Naive thymus-derived CD4-positive, alpha-beta T cell (primary cell): ENCODE measurements at regions of chr12 and their contacts with region 1.

Region 1: DNA sequence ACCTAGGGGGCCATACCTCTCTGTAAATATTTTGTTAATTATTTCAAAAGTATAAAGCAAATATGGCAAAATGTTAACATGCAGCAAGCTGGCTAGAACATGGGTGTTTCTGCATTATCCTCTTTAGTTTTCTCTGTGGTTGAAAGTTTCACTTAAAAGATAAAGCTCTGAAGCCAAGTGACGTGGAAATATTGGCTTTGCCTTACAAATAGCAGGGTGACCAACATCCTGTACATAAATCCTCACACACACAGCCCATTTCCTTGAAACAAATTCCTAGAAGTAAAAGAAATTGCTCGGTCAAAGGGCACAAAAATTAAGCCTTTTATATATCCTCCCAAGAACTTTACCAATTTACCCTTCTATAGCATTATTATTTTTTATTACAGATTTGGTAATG is 10.6 kb upstream of the VWF start:
- DNase-seq: no peak
- ATAC-seq: no peak
- H3K4me3 ChIP-seq: no peak overlapping the region
- H3K4me3 Mint-ChIP-seq: no peak overlapping the region
- H3K27ac ChIP-seq: no peak overlapping the region
- H3K27ac Mint-ChIP-seq: peak overlapping the region in 1 of 9 donors; percentile 41
- H3K4me1 ChIP-seq: peaks cover 0 to 16% of the 10 kb centered on the region in 2 donors
- H3K4me1 Mint-ChIP-seq: peaks cover 14 to 29% (median 19%) of the 10 kb centered on the region in 7 donors
- H3K27me3 ChIP-seq: no peaks in the 10 kb centered on the region
- H3K27me3 Mint-ChIP-seq: no peaks in the 10 kb centered on the region

Region 2: DNA sequence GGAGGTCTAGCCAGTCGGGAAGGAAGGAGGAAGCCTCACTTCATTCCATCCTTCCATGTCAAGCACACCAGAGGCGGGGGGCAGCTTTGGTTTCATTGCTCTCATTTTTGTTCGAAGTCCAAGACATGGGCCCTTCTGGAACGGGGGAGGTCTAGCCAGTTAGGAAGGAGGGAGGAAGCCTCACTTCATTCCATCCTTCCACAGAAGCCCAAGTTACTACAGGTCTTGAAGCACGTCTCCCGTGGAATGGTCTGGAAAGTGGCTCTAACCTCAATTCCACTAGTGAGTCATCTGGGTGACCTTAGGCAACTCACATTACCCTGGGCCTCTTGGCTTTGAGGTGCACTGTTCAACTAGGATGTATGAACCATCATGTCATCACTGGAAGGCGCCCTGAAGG is 546.9 kb before region 1 on chr12:
- CTCF ChIA-PET with region 1: no interaction called
- POLR2A ChIA-PET with region 1: no interaction called
- intact Hi-C with region 1: no loop called
- DNase-seq: no peak
- ATAC-seq: no peak
- H3K4me3 ChIP-seq: no peak overlapping the region
- H3K4me3 Mint-ChIP-seq: no peak overlapping the region
- H3K27ac ChIP-seq: no peak overlapping the region
- H3K27ac Mint-ChIP-seq: no peak overlapping the region
- H3K4me1 ChIP-seq: no peaks in the 10 kb centered on the region
- H3K4me1 Mint-ChIP-seq: no peaks in the 10 kb centered on the region
- H3K27me3 ChIP-seq: no peaks in the 10 kb centered on the region
- H3K27me3 Mint-ChIP-seq: peaks cover 0 to 7% (median 3%) of the 10 kb centered on the region in 5 donors

Region 3: DNA sequence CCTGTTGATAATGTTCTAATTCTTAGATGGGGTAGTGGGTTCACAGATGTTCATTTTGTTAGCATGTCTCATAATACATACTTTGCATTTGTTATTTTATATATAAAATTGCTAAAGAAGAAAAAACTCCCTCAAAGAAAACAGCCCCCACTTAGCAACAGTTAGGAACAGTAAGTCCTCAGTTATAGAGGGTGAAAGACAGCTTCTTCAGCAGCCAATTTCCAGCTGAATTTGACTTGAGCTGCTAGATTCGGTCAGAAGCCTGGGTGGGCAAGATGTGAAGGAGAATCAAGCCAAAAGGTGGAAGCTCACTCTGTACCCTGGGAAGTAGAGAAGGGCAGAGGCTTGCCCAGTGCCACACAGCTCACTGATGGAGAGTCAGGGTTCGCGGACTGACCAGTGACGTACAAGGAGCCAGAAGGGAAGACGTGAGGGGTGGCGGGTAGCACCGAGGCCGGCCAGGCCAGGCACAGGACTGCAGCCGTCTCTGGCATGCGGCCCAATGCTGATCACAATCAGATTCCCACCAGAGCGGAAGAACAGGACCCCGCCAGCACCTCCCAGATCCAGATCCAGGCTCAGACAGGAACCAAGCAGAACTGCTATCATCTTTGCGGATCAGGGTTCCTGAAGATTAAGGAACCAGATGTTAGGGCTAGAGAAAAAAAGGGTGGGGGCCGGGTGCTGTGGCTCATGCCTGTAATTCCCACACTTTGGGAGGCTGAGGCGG is 19.8 kb after region 1 on chr12:
- CTCF ChIA-PET with region 1: no interaction called
- POLR2A ChIA-PET with region 1: interaction called, 11 read pairs
- intact Hi-C with region 1: no loop called
- DNase-seq: no peak
- ATAC-seq: no peak
- H3K4me3 ChIP-seq: no peak overlapping the region
- H3K4me3 Mint-ChIP-seq: no peak overlapping the region
- H3K27ac ChIP-seq: no peak overlapping the region
- H3K27ac Mint-ChIP-seq: no peak overlapping the region
- H3K4me1 ChIP-seq: no peaks in the 10 kb centered on the region
- H3K4me1 Mint-ChIP-seq: peaks cover 0 to 14% (median 6%) of the 10 kb centered on the region in 7 donors
- H3K27me3 ChIP-seq: no peaks in the 10 kb centered on the region
- H3K27me3 Mint-ChIP-seq: peaks cover 0 to 7% (median 0%) of the 10 kb centered on the region in 5 donors